ENCODE measurements at regions of chr2 and their contacts with region 1.

Region 1: GRCh38 chr2:219229305-219230058 is at the starts of genes ANKZF1 and ATG9A:
- DNase-seq: peak; percentile 99
- ATAC-seq: peak; percentile 98
- H3K4me3 Mint-ChIP-seq: peak within 1 kb of the TSS; percentile 93
- H3K27ac Mint-ChIP-seq: peak within 1 kb of the TSS; percentile 97
- H3K4me1 Mint-ChIP-seq: peaks cover 12% of the 10 kb centered on the region
- H3K27me3 Mint-ChIP-seq: no peaks in the 10 kb centered on the region
- CTCF ChIP-seq: no peak
- total RNA-seq, gene ANKZF1: 56.9 to 70.4 TPM (median 58.0 TPM) in 3 replicates
- total RNA-seq, gene ATG9A: 42.9 to 48.4 TPM (median 46.7 TPM) in 3 replicates

Region 2: DNA sequence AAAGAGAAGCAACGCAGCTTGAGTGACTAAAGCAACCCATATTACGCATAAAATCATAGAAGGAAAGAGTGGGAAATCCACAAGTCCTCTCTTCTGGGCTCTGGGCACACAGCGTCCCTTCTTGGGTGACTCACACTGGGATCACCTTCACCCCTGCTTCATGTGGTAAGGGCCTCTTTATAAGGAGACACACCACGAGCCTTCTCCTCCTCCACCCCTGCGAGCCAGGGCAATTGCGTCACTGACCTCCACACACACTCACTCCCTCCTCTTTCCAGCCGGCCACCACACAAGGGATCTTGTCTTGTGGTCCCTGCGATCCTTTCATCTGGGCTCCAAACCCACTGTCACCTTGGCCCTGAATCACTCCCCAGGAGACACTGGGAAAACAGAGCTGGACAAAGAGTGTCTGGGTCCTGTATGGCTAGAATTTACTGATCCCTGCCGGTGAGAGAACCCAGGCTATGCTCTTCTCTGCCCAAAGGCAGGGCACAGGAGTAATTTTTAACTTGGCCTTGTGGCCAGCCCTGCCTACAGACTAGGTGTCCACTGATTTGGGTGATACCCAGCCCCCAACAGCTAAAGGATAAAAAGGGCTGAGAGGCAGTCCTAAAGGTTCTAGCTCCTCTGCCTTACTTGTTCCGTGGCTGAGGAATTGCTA is 104.1 kb before region 1 on chr2:
- CTCF ChIA-PET with region 1: no interaction called
- POLR2A ChIA-PET with region 1: no interaction called
- DNase-seq: no peak
- ATAC-seq: no peak
- H3K4me3 Mint-ChIP-seq: no peak overlapping the region
- H3K27ac Mint-ChIP-seq: no peak overlapping the region
- H3K4me1 Mint-ChIP-seq: peaks cover 18% of the 10 kb centered on the region
- H3K27me3 Mint-ChIP-seq: no peaks in the 10 kb centered on the region
- CTCF ChIP-seq: no peak

Region 3: DNA sequence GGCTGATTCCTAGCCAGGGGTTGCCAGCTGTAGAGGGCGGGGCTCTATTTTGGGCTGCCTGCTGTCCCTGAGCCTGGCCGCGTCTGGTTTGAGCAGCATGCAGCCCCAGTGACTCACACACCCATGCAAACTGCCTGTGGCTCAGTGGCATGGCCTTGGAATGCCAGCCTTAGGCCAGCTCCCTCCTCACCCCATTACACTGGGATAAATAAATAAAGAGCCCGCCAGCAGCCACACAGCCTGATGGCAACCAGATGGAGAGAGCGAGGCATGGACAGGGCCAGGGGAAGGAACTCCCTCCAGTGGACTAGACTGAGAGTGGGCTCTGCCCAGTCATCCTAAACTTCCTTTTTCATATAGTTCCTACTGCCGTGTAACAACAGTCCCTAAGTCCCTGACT is 87.2 kb before region 1 on chr2:
- CTCF ChIA-PET with region 1: no interaction called
- POLR2A ChIA-PET with region 1: no interaction called
- DNase-seq: no peak
- ATAC-seq: no peak; the same call in 1 of the 2 replicates
- H3K4me3 Mint-ChIP-seq: no peak overlapping the region
- H3K27ac Mint-ChIP-seq: no peak overlapping the region
- H3K4me1 Mint-ChIP-seq: no peaks in the 10 kb centered on the region
- H3K27me3 Mint-ChIP-seq: no peaks in the 10 kb centered on the region; the same call in 1 of the 2 replicates
- CTCF ChIP-seq: no peak

Region 4: GRCh38 chr2:219245148-219245898 is 15.8 kb after region 1 on chr2 and contains the starts of genes GLB1L and STK16:
- CTCF ChIA-PET with region 1: interaction called, 4 read pairs
- POLR2A ChIA-PET with region 1: interaction called, 14 read pairs
- DNase-seq: peak; percentile 96
- ATAC-seq: peak; percentile 84
- H3K4me3 Mint-ChIP-seq: peak within 1 kb of the TSS; percentile 93
- H3K27ac Mint-ChIP-seq: peak within 1 kb of the TSS; percentile 96
- H3K4me1 Mint-ChIP-seq: peaks cover 22% of the 10 kb centered on the region
- H3K27me3 Mint-ChIP-seq: no peaks in the 10 kb centered on the region
- CTCF ChIP-seq: no peak
- total RNA-seq, gene GLB1L: 5.2 to 6.4 TPM (median 6.1 TPM) in 3 replicates
- total RNA-seq, gene STK16: 27.4 to 28.8 TPM (median 27.5 TPM) in 3 replicates